ENCODE measurements at regions of chr6 and their contacts with region 1.

Region 1: GRCh38 chr6:130282234-130282995 is 59.7 kb upstream of the SAMD3 start:
- DNase-seq: peak in 1 of 3 donors; percentile 55
- ATAC-seq: peak; percentile 50
- H3K4me3 ChIP-seq: no peak overlapping the region
- H3K4me1 ChIP-seq: no peaks in the 10 kb centered on the region
- CTCF ChIP-seq: no peak

Region 2: GRCh38 chr6:130076512-130076911 is 205.9 kb before region 1 on chr6:
- intact Hi-C with region 1: loop called in 1 of 2 experiments (anchors 10 kb)
- DNase-seq: no peak
- ATAC-seq: no peak
- H3K4me3 ChIP-seq: no peak overlapping the region
- H3K4me1 ChIP-seq: no peaks in the 10 kb centered on the region
- CTCF ChIP-seq: no peak

Region 3: DNA sequence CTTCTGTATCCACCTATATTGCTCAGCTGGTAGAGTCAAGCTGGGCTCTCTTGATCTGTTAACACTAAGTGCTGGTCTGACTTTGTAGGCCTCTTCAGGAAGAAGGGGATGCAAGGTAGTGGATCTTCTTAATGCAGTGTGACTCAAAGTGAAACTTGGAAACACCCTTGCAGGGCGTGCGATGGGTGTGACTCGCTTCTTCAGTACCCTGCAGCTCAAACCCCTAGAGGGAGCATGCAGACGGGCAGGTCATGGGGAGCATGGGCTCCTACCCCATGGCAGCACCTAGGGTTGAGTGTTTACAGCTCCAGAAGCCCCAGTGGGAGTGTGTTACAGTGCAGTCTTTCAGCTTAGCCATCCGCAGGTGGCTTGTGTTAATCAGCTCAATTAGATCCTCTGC is 58.9 kb before region 1 on chr6:
- intact Hi-C with region 1: no loop called
- DNase-seq: peak; percentile 21 to 63 (median 26)
- ATAC-seq: peak; percentile 79
- H3K4me3 ChIP-seq: no peak overlapping the region
- H3K4me1 ChIP-seq: no peaks in the 10 kb centered on the region
- CTCF ChIP-seq: no peak

Measured in mucosa of descending colon (tissue), 3 donors.